ENCODE measurements at regions of chr2 and their contacts with region 1.

Region 1: GRCh38 chr2:209960676-209961630 is 41.5 kb upstream of the RPE start:
- DNase-seq: peak; percentile 40
- CTCF ChIP-seq: peak; percentile 63

Region 2: GRCh38 chr2:209713219-209713618 is 247.7 kb before region 1 on chr2:
- CTCF ChIA-PET with region 1: no interaction called
- POLR2A ChIA-PET with region 1: no interaction called
- DNase-seq: no peak
- CTCF ChIP-seq: no peak

Region 3: GRCh38 chr2:209942936-209943605 is 17.9 kb before region 1 on chr2:
- CTCF ChIA-PET with region 1: interaction called, 21 read pairs
- POLR2A ChIA-PET with region 1: no interaction called
- DNase-seq: no peak
- CTCF ChIP-seq: no peak

Region 4: GRCh38 chr2:209977386-209978239 is 16.7 kb after region 1 on chr2:
- CTCF ChIA-PET with region 1: interaction called, 19 read pairs
- POLR2A ChIA-PET with region 1: no interaction called
- DNase-seq: peak; percentile 49
- CTCF ChIP-seq: peak; percentile 20

Measured in GM10248 (cell line).